GM10248 (cell line): ENCODE measurements at regions of chr16 and their contacts with region 1.

Region 1: DNA sequence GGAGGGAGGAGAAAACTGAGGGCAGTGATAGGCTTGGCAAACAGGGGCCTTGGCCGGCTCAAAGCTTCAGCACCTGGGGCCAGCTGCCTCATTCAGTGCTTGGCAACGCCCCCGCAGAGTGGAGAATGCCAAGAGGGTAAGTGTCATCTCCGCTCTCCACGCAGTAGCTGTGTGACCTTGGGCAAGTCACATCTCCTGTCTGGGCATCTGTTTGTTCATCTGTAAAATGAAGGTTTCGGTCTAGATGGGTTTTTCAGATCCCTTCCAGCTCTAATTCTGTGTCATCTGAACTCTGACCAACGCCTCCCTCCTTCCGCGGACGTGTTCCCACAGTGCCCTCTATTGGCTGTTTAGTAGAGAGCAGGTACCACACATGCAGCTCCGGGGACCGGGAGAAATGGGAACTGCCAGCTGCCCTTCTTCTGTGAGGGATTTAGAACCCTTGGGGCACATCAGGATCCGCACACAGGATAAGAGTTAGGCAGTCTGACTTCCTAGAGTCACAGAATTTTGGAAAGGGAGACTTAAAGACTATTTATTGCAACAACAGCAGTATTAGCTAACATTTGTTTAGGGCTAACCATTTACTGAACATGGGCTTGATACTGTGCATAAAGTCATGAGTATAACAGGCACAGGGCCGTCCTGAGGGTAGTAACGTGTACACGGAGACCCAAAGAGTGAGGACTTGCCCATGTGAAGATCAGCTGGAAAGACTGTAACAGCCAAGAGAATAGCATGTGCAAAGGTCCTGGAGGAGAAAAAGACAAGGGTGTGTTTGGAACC is 26.8 kb downstream of the GP2 start:
- DNase-seq: peak; percentile 69
- CTCF ChIP-seq: peak; percentile 86

Region 2: DNA sequence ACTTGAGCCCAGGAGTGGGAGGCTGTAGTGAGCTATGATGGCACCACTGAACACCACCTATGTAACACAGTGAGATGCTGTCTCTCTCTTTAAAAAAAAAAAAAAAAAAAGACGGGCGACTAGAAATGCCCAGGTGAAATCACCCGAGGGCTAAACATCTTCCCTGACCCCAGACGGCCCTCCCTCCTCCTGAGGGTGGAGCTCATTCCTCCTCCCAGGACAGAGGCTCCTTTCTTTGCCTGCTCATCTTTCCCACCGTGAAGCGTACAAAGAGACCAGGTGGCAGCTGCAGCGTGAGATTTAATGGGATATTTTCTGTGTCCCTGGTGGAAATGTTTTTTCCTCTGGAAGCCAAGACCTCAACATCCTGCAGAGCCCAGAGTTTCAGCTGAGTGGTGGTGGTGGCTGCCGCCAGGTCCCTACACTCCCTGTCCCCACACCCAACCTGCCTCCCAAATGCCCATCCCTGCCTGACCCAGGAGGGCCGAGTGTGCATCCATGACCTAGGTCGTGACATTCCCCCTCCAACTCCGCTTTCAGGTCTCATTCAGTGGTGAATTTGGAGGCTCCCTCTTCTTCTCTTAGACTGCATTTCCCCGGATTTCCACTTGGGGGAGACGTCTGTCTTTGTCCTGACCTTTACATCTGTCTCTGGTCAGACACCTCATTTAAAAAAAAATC is 401.4 kb before region 1 on chr16:
- CTCF ChIA-PET with region 1: interaction called, 19 read pairs
- POLR2A ChIA-PET with region 1: no interaction called
- DNase-seq: peak; percentile 67
- CTCF ChIP-seq: peak; percentile 68

Region 3: DNA sequence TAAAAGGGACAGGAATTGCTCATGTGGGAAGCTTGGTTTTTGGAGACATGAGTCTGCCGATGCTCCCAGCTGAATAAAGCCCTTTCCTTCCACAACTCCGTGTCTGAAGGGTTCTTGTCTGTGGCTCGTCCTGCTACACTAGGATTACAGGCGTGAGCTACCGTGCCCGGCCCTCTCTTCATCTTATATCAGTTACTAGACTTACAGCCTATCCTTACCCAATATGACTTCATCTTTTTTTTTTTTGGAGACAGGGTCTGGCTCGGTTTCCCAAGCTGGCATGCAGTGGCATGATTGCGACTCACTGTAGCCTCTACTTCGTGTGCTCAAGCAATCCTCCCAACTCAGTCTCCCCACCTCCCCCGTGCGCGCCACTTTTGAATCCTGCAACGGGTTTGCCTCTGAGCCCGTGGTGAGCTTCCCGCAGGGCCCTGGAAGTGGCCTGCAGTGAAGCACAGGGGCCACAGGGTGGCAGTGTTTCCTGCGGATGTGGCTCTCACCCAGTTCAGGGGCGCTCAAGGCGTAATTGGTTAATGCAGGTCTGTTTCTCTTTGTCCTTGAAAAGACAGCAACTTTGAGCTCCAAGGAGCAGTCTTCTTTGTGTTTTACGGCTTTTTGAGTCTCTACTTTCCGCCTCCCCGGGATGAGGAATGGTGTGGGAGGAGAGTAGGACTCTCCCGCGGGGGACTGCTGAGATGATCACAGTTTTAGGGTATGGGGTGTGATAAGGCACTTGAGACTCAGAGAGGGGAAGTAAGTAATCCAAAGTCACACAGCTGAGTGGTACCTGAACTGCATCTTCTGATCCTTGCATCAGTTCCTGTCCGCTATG is 393.1 kb before region 1 on chr16:
- CTCF ChIA-PET with region 1: interaction called, 121 read pairs
- POLR2A ChIA-PET with region 1: no interaction called
- DNase-seq: peak; percentile 76
- CTCF ChIP-seq: peak; percentile 92

Region 4: GRCh38 chr16:20310421-20311395 is 10.2 kb after region 1 on chr16:
- CTCF ChIA-PET with region 1: interaction called, 23 read pairs
- POLR2A ChIA-PET with region 1: no interaction called
- DNase-seq: no peak
- CTCF ChIP-seq: no peak